ENCODE measurements at regions of chr11 and their contacts with region 1.

Region 1: DNA sequence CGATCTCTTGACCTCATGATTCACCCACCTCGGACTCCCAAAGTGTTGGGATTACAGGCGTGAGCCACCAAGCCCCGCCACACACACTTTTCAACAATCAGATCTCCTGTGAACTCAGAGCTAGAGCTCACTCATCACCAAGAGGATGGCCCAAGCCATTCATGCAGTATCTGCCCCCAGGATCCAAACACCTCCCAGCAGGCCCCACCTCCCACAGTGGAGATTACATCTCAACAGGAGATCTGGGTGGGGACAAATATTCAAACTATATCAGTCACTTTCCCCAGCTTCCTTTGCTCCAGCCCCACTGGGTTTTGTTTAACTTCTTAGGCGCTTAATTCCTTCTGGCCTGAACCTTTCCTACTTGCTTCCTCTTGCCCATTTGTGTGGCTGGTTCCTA is 26.3 kb upstream of the SORL1 start:
- DNase-seq: no peak
- H3K4me3 ChIP-seq: no peak overlapping the region
- H3K27ac ChIP-seq: no peak overlapping the region
- H3K4me1 ChIP-seq: peaks cover 0 to 3% (median 1%) of the 10 kb centered on the region in 4 experiments; a peak in 3 of 7 replicates
- H3K27me3 ChIP-seq: peaks cover 0 to 12% (median 5%) of the 10 kb centered on the region in 4 experiments; a peak in 6 of 7 replicates
- CTCF ChIP-seq: no peak
- EP300 ChIP-seq: no peak
- POLR2A ChIP-seq: no peak
- RAD21 ChIP-seq: no peak

Region 2: DNA sequence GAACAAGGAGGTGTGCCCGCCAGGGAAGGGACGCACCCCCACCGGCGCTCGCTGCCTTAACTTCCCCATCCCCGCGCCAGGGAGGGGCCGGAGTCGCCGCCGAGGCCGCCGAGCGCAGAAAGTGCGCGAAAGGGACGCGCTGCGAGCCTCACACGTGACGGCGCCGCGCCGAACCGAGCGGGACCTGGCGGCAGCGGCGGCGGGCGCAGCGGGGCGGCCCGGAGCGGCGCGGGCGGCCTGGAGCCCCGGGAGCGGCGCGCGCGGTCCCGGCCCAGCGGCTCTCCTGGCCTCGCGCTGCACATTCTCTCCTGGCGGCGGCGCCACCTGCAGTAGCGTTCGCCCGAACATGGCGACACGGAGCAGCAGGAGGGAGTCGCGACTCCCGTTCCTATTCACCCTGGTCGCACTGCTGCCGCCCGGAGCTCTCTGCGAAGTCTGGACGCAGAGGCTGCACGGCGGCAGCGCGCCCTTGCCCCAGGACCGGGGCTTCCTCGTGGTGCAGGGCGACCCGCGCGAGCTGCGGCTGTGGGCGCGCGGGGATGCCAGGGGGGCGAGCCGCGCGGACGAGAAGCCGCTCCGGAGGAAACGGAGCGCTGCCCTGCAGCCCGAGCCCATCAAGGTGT is 26.3 kb after region 1 on chr11 and contains the start of gene SORL1:
- CTCF ChIA-PET with region 1: interaction called, 6 read pairs
- POLR2A ChIA-PET with region 1: interaction called, 10 read pairs
- DNase-seq: peak; percentile 44 to 90
- H3K4me3 ChIP-seq: peak within 1 kb of the TSS; percentile 78 to 97 (median 90)
- H3K27ac ChIP-seq: peak within 1 kb of the TSS; percentile 81
- H3K4me1 ChIP-seq: peaks cover 9 to 24% (median 10%) of the 10 kb centered on the region in 4 experiments
- H3K27me3 ChIP-seq: peaks cover 0 to 3% (median 1%) of the 10 kb centered on the region in 4 experiments; a peak in 4 of 7 replicates
- CTCF ChIP-seq: peak; percentile 74 to 94 (median 76)
- EP300 ChIP-seq: 0 out of 3 replicates have a peak, but pooled peaks of 1 of the 2 experiments have one; percentile 33
- POLR2A ChIP-seq: peak in 1 of 2 experiments; percentile 74; a peak in 2 of 3 replicates
- RAD21 ChIP-seq: peak; percentile 37 to 70; a peak in 3 of 4 replicates
- total RNA-seq, gene SORL1: 65.5 and 66.6 TPM in 2 replicates